A673 (cell line): ENCODE measurements at regions of chr10 and their contacts with region 1.

Region 1: DNA sequence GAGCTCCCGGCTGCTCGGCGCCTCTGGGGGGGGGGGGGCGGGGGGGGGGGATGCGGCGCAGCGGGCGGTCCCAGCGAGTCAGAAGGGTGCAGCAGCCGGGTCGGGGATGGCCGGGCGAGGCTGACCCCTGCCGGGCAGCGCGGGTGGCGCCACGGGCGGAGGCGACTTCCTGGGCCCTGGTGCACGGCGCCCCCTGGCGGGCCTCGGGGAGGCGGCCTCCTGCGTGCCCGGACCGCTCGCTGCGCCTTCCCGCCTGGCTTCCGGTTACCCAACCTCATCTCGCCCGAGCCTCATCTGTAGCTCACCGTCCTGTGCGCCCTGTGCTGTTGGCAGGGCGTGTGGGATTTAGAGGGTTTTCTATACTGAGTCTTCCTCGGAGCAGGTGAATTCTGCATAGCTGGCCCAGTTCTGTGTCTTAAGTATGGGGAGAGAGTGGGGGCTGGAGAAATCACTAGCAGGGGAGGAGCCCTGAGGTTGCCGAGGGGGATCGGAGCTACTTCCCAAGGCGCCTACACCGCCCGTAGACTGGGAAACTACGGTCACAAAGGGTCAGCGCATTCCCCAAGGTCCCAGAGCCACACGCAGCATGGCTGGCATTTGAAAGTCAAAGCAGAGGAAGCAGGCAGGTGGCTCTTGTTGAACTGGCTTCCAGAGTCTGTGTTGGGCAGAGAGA is 28.3 kb upstream of the WDFY4 start:
- DNase-seq: peak; percentile 86
- H3K4me3 ChIP-seq: peak overlapping the region; percentile 31
- H3K27ac ChIP-seq: no peak overlapping the region
- H3K4me1 ChIP-seq: no peaks in the 10 kb centered on the region
- H3K27me3 ChIP-seq: peaks cover 33% of the 10 kb centered on the region
- CTCF ChIP-seq: peak; percentile 74

Region 2: DNA sequence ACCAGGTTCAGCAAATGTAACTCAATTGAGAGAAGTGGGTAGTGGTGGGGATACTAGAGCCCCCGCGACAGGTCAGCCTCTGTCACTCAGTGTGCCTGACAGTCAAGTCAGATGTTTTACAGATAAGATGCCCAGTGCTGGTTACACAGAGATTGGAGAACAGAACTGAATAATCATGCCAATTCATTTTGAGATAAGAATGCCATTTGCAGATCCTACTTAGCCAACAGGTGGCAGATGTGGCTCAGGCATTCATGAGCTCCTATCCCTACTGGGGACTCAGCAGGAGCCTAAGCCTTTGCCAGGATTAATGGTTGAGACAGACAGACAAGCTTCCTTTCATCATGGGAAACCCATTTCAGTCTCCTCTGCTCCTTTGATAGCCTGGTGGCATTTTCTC is 212.1 kb before region 1 on chr10:
- CTCF ChIA-PET with region 1: interaction called, 4 read pairs
- POLR2A ChIA-PET with region 1: no interaction called
- intact Hi-C with region 1: loop called (anchors 2 kb)
- DNase-seq: peak; percentile 90
- H3K4me3 ChIP-seq: no peak overlapping the region
- H3K27ac ChIP-seq: no peak overlapping the region
- H3K4me1 ChIP-seq: peaks cover 18% of the 10 kb centered on the region
- H3K27me3 ChIP-seq: no peaks in the 10 kb centered on the region
- CTCF ChIP-seq: peak; percentile 64

Region 3: DNA sequence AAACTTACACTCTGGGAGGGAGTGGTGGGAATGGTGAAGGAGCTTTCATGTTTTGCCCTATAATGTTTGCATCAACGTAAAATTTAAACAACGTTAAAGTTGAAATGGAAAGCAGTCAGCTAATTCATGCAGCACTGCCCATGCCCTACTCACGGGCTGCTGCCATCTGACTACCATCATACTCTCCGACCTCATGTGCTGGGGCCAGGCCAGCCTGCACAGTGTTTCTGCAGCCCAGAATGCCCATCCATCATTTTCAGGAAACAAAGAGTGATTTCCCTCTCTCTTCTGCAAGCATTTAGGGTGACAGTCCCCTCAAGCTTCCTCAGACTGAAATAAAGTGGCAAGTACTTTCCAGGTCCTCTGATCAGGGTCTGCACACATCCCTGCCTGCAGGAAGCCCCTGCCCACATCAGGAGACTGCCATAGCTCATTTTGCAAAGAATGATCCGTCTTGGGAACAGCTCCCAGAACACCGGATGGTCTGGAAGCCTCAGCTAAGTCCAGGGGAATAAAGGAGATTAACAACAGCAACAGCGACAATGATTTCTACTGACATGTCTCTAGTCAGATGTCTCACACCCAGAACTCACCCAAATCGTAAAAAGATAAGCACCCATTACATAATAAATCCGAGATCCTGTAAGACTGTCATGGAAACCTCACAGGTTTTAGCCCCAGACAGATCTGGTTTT is 91.8 kb before region 1 on chr10:
- CTCF ChIA-PET with region 1: no interaction called
- POLR2A ChIA-PET with region 1: no interaction called
- intact Hi-C with region 1: loop called (anchors 5 kb)
- DNase-seq: no peak
- H3K4me3 ChIP-seq: no peak overlapping the region
- H3K27ac ChIP-seq: no peak overlapping the region
- H3K4me1 ChIP-seq: no peaks in the 10 kb centered on the region
- H3K27me3 ChIP-seq: peaks cover 4% of the 10 kb centered on the region
- CTCF ChIP-seq: no peak

Region 4: GRCh38 chr10:49407552-49408137 is 751.3 kb after region 1 on chr10:
- CTCF ChIA-PET with region 1: interaction called, 3 read pairs
- POLR2A ChIA-PET with region 1: no interaction called
- intact Hi-C with region 1: loop called (anchors 10 kb)
- DNase-seq: peak; percentile 79
- H3K4me3 ChIP-seq: no peak overlapping the region
- H3K27ac ChIP-seq: no peak overlapping the region
- H3K4me1 ChIP-seq: no peaks in the 10 kb centered on the region
- H3K27me3 ChIP-seq: peaks cover 77% of the 10 kb centered on the region
- CTCF ChIP-seq: peak; percentile 90